ENCODE measurements at regions of chr10 and their contacts with region 1.

Region 1: DNA sequence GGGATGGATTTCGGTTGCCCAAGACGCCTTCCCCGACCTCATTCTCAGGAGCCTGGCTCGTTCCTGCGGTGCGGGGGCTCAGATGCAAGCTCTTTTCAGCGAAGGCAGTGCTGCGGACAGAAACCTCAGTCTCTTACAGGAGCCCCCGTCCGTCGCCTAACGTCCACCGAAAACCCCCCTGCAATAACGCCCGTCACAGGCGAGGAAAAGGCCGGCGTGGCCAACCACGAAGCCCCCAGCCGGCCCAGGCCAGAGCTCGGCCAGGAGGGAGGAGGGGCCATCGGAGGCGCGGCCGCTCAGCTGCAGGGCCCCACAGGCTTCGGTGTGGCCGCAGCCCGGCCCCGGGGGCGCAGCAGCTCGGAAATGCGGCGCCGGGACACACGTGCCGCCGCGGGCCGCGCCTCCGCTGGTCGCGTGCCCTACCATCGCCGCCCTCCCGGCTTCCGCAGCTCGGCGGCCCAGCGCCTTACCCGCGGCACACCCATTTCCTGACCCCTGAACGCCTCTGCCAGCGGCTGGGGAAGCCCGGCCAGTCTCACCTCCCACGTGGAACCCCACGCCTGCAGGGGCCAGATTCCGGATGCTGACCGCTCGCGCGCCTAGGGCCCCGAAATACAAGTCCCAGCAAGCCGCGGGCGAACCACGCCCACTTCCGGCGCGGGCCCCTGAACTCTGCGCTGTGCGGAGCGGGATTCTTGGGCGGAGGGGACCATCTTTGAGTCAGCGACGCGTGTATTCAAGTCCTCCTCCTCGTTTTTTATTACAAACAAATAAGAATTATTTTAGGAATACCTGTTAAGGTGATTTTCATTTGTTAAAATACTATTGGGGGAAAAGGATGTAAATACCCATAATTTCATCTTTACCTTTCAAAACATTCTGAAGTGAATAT is at the start of gene ZNF239:
- DNase-seq: peak; percentile 56
- H3K4me3 ChIP-seq: peak within 1 kb of the TSS in 2 of 3 experiments; percentile 26 to 36
- H3K27ac ChIP-seq: no peak within 1 kb of the TSS
- H3K4me1 ChIP-seq: peaks cover 6% of the 10 kb centered on the region
- H3K27me3 ChIP-seq: peaks cover 0 to 20% of the 10 kb centered on the region in 2 experiments
- CTCF ChIP-seq: no peak
- POLR2A ChIP-seq: no peak
- total RNA-seq, gene ZNF239: 0.44 and 0.51 TPM in 2 replicates

Region 2: DNA sequence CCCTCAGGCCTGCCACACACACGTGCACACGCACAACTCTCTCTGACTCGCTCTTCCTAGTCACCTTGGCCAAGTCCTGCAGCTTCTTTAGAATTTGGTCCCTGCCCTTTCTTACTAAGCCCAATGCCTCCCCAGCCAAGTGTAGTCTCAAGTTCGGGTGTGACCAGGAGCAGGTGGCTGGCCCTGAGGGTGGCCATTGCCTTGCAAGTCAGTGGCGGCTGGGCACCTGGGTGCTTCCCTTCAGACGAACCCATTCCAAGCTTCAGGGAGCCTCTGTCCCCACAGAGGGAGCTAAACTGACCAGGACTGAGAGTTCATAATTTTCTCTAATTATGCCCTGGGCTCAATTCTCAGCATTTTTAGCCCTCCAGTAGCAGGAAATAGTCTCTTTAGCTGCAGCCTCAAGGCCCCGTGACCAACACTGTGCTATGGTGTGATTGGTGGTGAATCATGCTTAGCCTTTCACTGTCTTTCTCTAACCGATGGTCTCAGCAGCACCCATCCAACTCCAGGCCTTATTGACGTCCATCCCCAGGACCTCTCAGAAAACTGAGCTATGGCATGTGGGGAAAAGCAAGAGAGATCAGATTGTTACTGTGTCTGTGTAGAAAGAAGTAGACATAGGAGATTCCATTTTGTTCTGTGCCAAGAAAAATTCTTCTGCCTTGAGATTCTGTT is 237.5 kb before region 1 on chr10:
- CTCF ChIA-PET with region 1: no interaction called
- POLR2A ChIA-PET with region 1: no interaction called
- dilution Hi-C with region 1: no loop called
- intact Hi-C with region 1: no loop called
- DNase-seq: no peak
- H3K4me3 ChIP-seq: no peak overlapping the region
- H3K27ac ChIP-seq: no peak overlapping the region
- H3K4me1 ChIP-seq: no peaks in the 10 kb centered on the region
- H3K27me3 ChIP-seq: no peaks in the 10 kb centered on the region
- CTCF ChIP-seq: no peak
- POLR2A ChIP-seq: no peak

Region 3: GRCh38 chr10:43606322-43607198 is 32.3 kb after region 1 on chr10 and contains the start of gene ZNF485:
- CTCF ChIA-PET with region 1: no interaction called
- POLR2A ChIA-PET with region 1: no interaction called
- dilution Hi-C with region 1: no loop called
- intact Hi-C with region 1: loop called (anchors 5 kb)
- DNase-seq: peak; percentile 60
- H3K4me3 ChIP-seq: peak within 1 kb of the TSS; percentile 12 to 54 (median 19)
- H3K27ac ChIP-seq: no peak within 1 kb of the TSS
- H3K4me1 ChIP-seq: no peaks in the 10 kb centered on the region
- H3K27me3 ChIP-seq: no peaks in the 10 kb centered on the region
- CTCF ChIP-seq: no peak
- POLR2A ChIP-seq: peak; percentile 60
- total RNA-seq, gene ZNF485: 1.2 and 1.7 TPM in 2 replicates

Region 4: GRCh38 chr10:43648398-43649184 is 74.3 kb after region 1 on chr10 and contains the start of gene ZNF32:
- CTCF ChIA-PET with region 1: no interaction called
- POLR2A ChIA-PET with region 1: no interaction called
- dilution Hi-C with region 1: no loop called
- intact Hi-C with region 1: loop called (anchors 5 kb)
- DNase-seq: peak; percentile 80
- H3K4me3 ChIP-seq: peak within 1 kb of the TSS; percentile 50 to 77 (median 62)
- H3K27ac ChIP-seq: peak within 1 kb of the TSS; percentile 42
- H3K4me1 ChIP-seq: peaks cover 5% of the 10 kb centered on the region
- H3K27me3 ChIP-seq: peaks cover 0 to 6% of the 10 kb centered on the region in 2 experiments
- CTCF ChIP-seq: no peak
- POLR2A ChIP-seq: peak; percentile 37
- total RNA-seq, gene ZNF32: 14.4 and 14.5 TPM in 2 replicates

Measured in endothelial cell of umbilical vein (primary cell).